Activated T-helper 1 cell treated with anti-CD3 and anti-CD28 coated beads, Interleukin-12 subunit alpha, Interleukin-12 subunit beta, Interleukin-2, Interleukin-4 antibody, amounts not matched to agents 30 ng/mL and 10 ng/mL and 1 ng/mL, durations not matched to agents 14 hours and 24 hours and 36 hours (primary cell): ENCODE measurements at regions of chr3 and their contacts with region 1.

Region 1: DNA sequence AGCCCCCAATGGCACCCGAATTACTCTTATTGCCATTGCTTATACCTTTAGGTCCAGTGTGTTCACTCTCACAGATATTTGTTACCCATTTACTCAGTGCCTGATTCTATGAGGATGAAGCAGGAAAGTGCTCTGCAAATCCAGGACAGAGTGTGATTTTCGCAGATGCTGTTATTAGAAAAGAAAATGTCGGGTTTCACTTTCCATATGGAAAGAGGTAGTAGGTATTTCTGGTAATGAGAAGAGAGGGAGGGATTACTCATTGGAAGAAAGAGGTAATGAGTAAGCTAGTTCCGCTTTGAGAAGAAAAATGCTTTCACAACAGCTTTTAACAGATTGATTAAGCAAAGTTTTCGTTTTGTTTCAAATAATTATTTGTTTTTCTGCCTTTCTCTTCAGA is 336.3 kb upstream of the CFAP20DC start:
- DNase-seq: no peak
- H3K4me3 Mint-ChIP-seq: peak overlapping the region; percentile 32
- H3K27ac Mint-ChIP-seq: peak overlapping the region; percentile 97
- H3K4me1 Mint-ChIP-seq: peaks cover 91% of the 10 kb centered on the region
- H3K27me3 Mint-ChIP-seq: no peaks in the 10 kb centered on the region

Region 2: DNA sequence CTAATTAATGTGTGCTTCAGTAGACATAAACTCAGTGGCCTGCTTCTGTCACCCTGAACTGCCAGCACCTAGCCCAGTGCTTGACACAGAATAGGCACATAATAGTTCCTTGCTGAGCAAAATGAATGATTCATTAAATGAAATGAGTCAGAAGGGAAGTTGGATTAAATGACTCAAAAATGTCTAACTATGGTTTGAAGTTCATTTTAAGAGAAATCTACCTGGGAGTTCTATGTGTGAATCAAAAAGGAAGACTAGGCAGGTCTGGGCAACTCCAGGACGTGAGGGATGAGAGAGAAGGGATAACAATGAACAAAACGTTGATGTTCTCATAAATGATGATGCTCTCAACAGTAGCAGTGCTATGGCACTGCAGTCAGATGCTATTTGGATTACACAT is 511.4 kb before region 1 on chr3:
- intact Hi-C with region 1: loop called (anchors 2 kb)
- DNase-seq: no peak
- H3K4me3 Mint-ChIP-seq: no peak overlapping the region
- H3K27ac Mint-ChIP-seq: peak overlapping the region; percentile 65
- H3K4me1 Mint-ChIP-seq: peaks cover 14% of the 10 kb centered on the region
- H3K27me3 Mint-ChIP-seq: no peaks in the 10 kb centered on the region

Region 3: GRCh38 chr3:59115364-59116232 is 270.6 kb before region 1 on chr3:
- intact Hi-C with region 1: no loop called
- DNase-seq: no peak
- H3K4me3 Mint-ChIP-seq: no peak overlapping the region
- H3K27ac Mint-ChIP-seq: no peak overlapping the region
- H3K4me1 Mint-ChIP-seq: no peaks in the 10 kb centered on the region
- H3K27me3 Mint-ChIP-seq: no peaks in the 10 kb centered on the region

Region 4: DNA sequence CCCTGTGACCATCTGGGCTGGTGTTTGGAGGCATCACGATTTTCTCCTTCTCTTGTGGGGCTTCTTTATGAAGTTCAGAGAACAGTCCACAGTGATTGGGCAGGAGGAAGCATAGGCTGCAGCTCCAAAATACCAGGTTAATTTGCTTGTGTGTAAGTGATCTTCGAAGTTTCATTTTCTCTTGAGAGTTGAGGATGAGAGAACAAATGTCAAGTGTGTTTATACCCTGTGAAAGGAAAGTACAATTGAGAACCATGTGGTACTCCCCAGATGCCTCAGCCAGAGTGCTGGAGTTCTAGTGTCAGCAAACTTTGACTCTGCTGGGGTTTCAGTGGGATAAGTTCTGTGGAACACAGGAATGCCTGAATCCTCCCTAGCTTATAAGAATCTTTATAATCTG is 20.8 kb after region 1 on chr3:
- intact Hi-C with region 1: loop called (anchors 2 kb)
- DNase-seq: no peak
- H3K4me3 Mint-ChIP-seq: no peak overlapping the region
- H3K27ac Mint-ChIP-seq: peak overlapping the region; percentile 31
- H3K4me1 Mint-ChIP-seq: peaks cover 28% of the 10 kb centered on the region
- H3K27me3 Mint-ChIP-seq: no peaks in the 10 kb centered on the region

Region 5: GRCh38 chr3:59480486-59480995 is 94.4 kb after region 1 on chr3:
- intact Hi-C with region 1: loop called (anchors 1 kb)
- DNase-seq: no peak
- H3K4me3 Mint-ChIP-seq: peak overlapping the region; percentile 52
- H3K27ac Mint-ChIP-seq: peak overlapping the region; percentile 72
- H3K4me1 Mint-ChIP-seq: peaks cover 41% of the 10 kb centered on the region
- H3K27me3 Mint-ChIP-seq: no peaks in the 10 kb centered on the region

Region 6: DNA sequence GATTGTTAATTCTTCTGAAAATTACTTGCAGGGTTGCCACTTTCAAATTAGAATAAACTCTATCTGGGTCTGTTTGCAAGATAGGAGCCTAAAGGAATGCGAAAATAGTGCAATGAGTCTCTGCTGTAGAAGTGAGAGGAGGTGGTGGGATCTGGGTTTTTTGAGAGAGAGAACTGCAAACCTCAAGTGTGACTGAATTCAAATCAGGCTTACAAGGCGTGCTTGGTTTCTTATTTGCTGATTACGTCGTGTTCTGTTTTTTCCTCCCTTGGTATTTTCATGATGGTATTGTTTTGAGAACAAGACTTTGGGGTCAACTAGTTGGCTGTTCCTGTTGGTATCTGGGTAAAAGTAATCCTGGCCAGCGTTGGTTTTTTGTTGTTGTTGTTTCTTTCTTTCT is 154.5 kb after region 1 on chr3:
- intact Hi-C with region 1: no loop called
- DNase-seq: no peak
- H3K4me3 Mint-ChIP-seq: no peak overlapping the region
- H3K27ac Mint-ChIP-seq: peak overlapping the region; percentile 38
- H3K4me1 Mint-ChIP-seq: peaks cover 23% of the 10 kb centered on the region
- H3K27me3 Mint-ChIP-seq: peaks cover 2% of the 10 kb centered on the region

Region 7: GRCh38 chr3:59726279-59726678 is 340.1 kb after region 1 on chr3:
- intact Hi-C with region 1: loop called (anchors 5 kb)
- DNase-seq: peak; percentile 9
- H3K4me3 Mint-ChIP-seq: no peak overlapping the region
- H3K27ac Mint-ChIP-seq: no peak overlapping the region
- H3K4me1 Mint-ChIP-seq: peaks cover 26% of the 10 kb centered on the region
- H3K27me3 Mint-ChIP-seq: peaks cover 5% of the 10 kb centered on the region

Region 8: GRCh38 chr3:60017631-60018030 is 631.5 kb after region 1 on chr3:
- intact Hi-C with region 1: loop called (anchors 2 kb)
- DNase-seq: peak; percentile 66
- H3K4me3 Mint-ChIP-seq: peak overlapping the region; percentile 74
- H3K27ac Mint-ChIP-seq: peak overlapping the region; percentile 96
- H3K4me1 Mint-ChIP-seq: peaks cover 67% of the 10 kb centered on the region
- H3K27me3 Mint-ChIP-seq: peaks cover 2% of the 10 kb centered on the region

Region 9: DNA sequence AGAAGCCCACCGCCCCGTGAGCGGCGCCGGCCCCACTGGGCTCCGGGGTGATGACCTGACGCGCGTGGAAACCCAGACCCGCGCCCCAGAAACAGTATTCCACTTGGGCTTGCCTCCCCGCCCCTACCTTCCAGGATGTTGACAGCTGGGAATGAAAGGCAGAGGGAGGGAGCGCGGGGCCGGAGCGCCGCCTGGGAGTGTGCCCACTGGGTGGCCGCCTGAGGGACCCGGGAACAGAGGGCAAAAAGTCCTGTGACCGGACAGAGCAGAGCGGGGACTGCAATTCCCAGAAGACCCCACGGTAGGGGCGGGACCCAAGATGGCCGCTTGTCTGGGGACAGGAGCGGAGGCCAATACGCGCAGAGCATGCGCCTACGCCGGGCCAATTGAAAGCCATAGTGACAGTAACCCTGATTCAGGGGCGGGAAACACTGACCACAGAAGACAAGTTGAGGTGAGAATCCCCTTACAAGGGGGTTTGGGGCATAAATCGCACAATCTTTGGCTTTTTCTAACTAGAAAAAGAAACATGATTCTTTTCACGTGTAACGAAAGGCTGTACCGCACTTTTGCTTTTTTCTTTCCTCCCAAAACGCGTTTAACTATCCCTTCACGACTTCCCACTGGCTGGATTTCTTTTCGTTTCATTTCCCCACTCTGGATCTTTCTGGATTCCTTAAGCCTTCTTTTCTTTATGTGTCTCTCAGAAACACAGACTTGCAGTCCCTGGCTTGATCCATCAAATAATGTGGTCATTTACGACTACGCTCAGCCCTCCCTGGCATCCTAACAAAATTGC is 1865.2 kb after region 1 on chr3 and contains the start of gene FHIT:
- intact Hi-C with region 1: loop called (anchors 2 kb)
- DNase-seq: peak; percentile 90
- H3K4me3 Mint-ChIP-seq: peak within 1 kb of the TSS; percentile 96
- H3K27ac Mint-ChIP-seq: peak within 1 kb of the TSS; percentile 94
- H3K4me1 Mint-ChIP-seq: peaks cover 30% of the 10 kb centered on the region
- H3K27me3 Mint-ChIP-seq: peaks cover 12% of the 10 kb centered on the region
- total RNA-seq, gene FHIT: 19.9 and 22.6 TPM in 2 replicates